ENCODE measurements at regions of chr1 and their contacts with region 1.

Region 1: DNA sequence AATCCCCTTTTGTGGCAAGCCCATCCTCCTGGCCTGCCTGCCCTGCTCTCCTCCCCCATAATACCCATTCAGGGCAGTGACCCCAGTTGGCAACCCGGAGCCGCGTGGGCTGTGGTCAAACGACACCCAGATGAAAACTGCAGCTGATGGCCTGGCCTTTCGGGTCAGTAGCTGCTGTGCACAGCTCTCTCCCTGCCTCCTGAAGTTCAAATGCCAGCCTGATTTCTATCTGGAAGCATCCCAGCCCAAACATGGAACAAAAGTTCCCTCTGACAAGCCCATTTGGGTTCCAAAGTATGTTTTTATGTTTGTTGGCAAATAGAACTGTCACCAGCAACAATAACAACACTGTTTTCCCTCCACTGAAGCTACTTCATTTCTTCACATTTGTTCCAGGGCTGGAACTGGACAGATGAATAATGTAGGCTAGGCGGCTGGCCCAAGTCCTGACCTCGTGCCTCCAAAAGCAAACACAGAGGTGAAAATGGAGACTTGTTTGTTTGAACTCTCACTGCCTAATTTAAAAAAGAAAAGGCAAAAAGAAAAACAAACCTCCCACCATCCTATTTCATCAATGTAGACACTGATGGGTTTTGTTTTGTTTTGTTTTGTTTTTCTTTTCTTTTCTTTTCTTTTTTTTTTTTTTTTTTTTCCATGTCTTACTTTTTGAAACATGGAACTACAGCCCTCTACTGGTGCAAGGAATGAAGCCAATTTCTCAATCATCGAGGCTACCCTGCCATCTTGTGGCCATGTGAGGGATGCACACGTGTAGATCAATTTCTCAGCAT is 179.0 kb downstream of the ADSS2 start:
- DNase-seq: peak; percentile 71
- H3K4me3 ChIP-seq: no peak overlapping the region
- H3K27ac ChIP-seq: peak overlapping the region; percentile 85
- H3K4me1 ChIP-seq: peaks cover 23% of the 10 kb centered on the region
- H3K27me3 ChIP-seq: no peaks in the 10 kb centered on the region
- CTCF ChIP-seq: peak; percentile 99 to 100

Region 2: DNA sequence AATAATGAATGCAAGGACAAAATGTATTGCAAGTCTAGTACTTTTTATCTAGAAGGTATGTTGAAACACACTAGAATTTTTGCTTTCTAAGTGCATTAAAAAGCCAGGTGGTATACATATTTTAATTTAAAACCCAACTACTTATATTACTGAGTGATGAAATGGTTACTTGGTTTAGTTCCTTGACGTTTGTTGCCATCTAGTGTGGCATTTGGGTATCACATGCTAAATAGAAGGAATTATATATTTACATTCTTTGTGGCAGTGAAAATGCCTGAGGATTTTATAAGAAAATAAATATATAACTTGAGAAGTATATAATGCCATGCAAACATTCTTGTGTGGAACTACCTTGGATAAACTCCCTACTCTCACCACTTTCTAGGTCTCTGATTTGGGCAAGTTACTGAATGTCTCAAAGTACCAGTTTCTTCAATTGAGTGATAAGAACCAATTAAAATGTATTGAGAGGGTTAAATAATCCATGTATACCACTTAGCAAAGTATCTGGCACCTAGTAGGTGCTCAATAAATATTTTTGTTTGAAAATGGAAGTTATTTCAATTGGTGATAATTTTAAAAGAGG is 947.3 kb before region 1 on chr1:
- CTCF ChIA-PET with region 1: no interaction called
- dilution Hi-C with region 1: loop called (anchors 25 kb)
- in situ Hi-C with region 1: no loop called
- intact Hi-C with region 1: no loop called
- DNase-seq: peak; percentile 25
- H3K4me3 ChIP-seq: no peak overlapping the region
- H3K27ac ChIP-seq: no peak overlapping the region
- H3K4me1 ChIP-seq: no peaks in the 10 kb centered on the region
- H3K27me3 ChIP-seq: no peaks in the 10 kb centered on the region
- CTCF ChIP-seq: peak; percentile 67 to 74

Region 3: DNA sequence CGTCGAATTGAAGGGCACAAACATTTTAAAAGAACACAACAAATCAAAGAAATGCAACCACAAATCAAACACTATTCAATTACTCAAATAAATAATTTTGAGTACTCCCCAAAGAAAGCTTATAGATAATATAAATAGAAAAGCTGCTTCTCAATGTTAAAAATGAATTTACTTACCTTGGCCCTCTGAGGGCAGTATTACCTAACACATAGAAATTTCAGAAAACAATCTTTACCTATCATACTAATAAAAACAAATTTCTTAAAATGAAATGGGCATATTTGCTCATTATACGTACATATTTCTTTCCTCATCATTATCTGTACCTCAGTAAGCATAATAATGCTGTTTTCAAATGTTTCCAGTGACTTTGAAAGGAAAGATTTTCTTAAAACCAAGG is 564.5 kb before region 1 on chr1:
- CTCF ChIA-PET with region 1: no interaction called
- dilution Hi-C with region 1: no loop called
- in situ Hi-C with region 1: loop called in 1 of 2 experiments (anchors 25 kb)
- intact Hi-C with region 1: loop called (anchors 1 kb)
- DNase-seq: no peak
- H3K4me3 ChIP-seq: no peak overlapping the region
- H3K27ac ChIP-seq: no peak overlapping the region
- H3K4me1 ChIP-seq: no peaks in the 10 kb centered on the region
- H3K27me3 ChIP-seq: no peaks in the 10 kb centered on the region
- CTCF ChIP-seq: peak; percentile 17 to 39

Region 4: GRCh38 chr1:243748706-243749283 is 523.9 kb before region 1 on chr1:
- CTCF ChIA-PET with region 1: no interaction called
- dilution Hi-C with region 1: no loop called
- in situ Hi-C with region 1: no loop called
- intact Hi-C with region 1: loop called (anchors 1 kb)
- DNase-seq: peak; percentile 56
- H3K4me3 ChIP-seq: no peak overlapping the region
- H3K27ac ChIP-seq: no peak overlapping the region
- H3K4me1 ChIP-seq: peaks cover 9% of the 10 kb centered on the region
- H3K27me3 ChIP-seq: no peaks in the 10 kb centered on the region
- CTCF ChIP-seq: peak; percentile 72 to 85

Region 5: DNA sequence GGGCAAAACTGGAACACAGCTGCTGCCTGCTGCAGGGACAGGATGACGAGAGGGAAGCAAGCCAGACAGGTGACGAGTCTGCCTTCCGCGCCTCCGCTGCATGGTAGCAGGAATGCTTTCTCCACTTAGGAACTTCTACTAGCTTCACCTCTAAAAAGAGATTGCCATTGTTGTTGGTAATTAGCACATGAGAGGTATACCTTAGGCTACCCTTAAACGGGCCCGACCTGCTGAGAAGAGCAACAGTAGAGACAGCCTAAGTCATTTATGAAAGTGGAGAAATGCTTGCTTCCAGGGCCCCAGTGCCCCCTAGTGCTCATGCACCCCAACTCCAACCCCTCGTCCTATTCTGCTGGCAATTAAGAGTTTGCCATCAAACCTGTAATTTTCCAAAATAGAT is 325.7 kb before region 1 on chr1:
- CTCF ChIA-PET with region 1: no interaction called
- dilution Hi-C with region 1: no loop called
- in situ Hi-C with region 1: no loop called
- intact Hi-C with region 1: loop called (anchors 1 kb)
- DNase-seq: peak; percentile 8
- H3K4me3 ChIP-seq: no peak overlapping the region
- H3K27ac ChIP-seq: no peak overlapping the region
- H3K4me1 ChIP-seq: peaks cover 20% of the 10 kb centered on the region
- H3K27me3 ChIP-seq: no peaks in the 10 kb centered on the region
- CTCF ChIP-seq: peak; percentile 42 to 45

Region 6: DNA sequence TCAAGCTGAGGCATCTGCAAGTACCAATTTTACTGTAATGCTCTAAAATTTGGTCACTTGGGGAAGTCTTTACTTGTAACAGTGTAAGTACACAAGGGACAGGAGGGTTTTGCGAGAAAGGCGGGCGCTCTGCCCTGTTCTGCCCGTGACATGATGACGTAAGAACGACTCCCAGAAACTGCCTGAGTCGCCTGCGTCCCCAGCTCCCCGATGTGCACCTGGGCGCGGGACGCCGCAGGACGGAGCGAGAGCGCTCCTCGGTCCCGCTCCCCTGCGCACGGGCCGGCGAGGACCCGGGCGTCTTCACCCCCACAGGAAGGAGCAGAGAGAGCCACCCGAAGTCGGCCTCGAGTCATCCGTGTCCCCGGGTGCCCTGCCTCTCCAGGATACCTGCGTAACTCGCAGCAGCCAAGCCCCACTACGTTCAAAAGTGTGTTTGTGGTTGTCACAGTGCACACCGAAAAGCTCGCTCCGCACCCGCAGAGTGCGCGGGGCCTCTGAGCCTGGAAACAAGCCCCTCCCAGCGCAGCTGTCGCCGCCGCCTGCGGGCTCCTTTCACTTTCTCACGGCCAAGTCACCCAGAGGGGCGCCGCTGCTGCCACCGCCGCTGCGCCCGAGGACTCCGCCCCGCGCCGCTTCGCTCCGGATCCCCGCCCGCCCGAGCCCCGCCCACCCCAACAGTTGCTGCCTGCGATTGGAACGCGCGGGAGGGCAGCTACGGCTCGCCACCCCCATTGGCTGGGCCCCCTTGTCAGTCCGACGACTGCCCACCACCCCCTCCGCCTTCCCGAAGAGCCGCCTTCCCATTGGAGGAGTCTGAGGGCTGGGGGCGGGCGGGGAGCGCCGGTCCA is 224.8 kb before region 1 on chr1:
- CTCF ChIA-PET with region 1: interaction called, 3 read pairs
- dilution Hi-C with region 1: no loop called
- in situ Hi-C with region 1: loop called in 1 of 2 experiments (anchors 25 kb)
- intact Hi-C with region 1: loop called (anchors 1 kb)
- DNase-seq: peak; percentile 99
- H3K4me3 ChIP-seq: peak overlapping the region; percentile 61 to 86 (median 82)
- H3K27ac ChIP-seq: peak overlapping the region; percentile 67
- H3K4me1 ChIP-seq: peaks cover 9% of the 10 kb centered on the region
- H3K27me3 ChIP-seq: peaks cover 8% of the 10 kb centered on the region
- CTCF ChIP-seq: no peak

Region 7: DNA sequence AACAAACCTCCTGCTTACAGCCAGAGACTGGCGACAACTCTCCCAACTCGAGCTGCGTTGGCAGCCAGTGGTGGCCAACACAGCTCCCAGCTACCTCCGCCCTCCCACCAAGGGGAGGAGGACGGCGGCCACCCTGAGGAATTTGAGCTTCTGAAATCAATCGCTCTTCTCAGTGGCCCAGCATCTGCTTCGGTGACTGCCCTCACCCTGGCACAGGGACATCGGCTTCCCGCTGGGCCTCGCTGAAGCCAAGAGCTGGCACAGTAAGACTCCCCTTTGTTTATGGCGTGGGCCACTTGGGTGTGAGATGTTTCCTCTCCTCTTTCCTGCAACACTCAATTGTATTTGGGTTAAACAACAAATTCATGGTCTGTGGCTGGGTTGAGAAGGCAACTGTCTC is 85.4 kb before region 1 on chr1:
- CTCF ChIA-PET with region 1: no interaction called
- dilution Hi-C with region 1: no loop called
- in situ Hi-C with region 1: no loop called
- intact Hi-C with region 1: no loop called
- DNase-seq: no peak
- H3K4me3 ChIP-seq: no peak overlapping the region
- H3K27ac ChIP-seq: no peak overlapping the region
- H3K4me1 ChIP-seq: no peaks in the 10 kb centered on the region
- H3K27me3 ChIP-seq: peaks cover 3% of the 10 kb centered on the region
- CTCF ChIP-seq: no peak

Region 8: GRCh38 chr1:244291236-244292201 is 18.9 kb after region 1 on chr1:
- CTCF ChIA-PET with region 1: no interaction called
- dilution Hi-C with region 1: no loop called
- in situ Hi-C with region 1: no loop called
- intact Hi-C with region 1: no loop called
- DNase-seq: no peak
- H3K4me3 ChIP-seq: no peak overlapping the region
- H3K27ac ChIP-seq: no peak overlapping the region
- H3K4me1 ChIP-seq: no peaks in the 10 kb centered on the region
- H3K27me3 ChIP-seq: no peaks in the 10 kb centered on the region
- CTCF ChIP-seq: no peak

Region 9: DNA sequence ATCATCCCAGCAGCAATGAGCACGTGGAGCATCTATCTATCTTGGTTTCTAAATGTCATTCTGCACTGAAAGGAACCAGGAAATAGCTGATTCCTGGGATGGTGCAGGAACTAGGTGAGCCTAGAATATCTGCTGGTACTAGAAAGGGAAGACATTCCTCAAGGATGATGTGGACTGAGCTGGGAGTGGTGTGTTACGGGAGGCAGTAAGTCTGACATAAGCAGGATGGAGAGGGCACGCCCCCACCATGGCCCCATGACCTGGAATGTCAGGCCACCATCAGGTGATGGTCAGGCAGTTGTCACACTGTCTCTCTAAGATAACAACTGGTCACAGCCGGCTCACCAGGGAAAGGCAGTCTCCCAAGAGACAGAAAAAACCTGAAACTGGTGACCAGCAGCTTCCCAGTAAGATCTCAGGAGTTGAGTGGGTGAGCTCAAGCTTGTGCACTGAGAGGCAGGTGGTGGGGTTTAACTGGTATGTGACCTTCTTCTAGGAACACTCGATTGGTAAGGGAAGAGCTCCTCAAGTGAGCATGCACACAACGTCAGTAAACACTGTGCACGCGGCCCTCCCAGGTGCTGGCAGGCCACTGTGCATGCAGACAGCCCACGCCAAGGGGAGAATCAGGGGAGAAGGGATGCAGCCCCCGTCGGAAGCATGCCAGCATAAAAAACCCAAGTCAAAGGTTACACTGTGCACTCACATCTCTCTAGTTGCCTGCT is 30.4 kb after region 1 on chr1:
- CTCF ChIA-PET with region 1: no interaction called
- dilution Hi-C with region 1: no loop called
- in situ Hi-C with region 1: no loop called
- intact Hi-C with region 1: loop called (anchors 1 kb)
- DNase-seq: peak; percentile 72
- H3K4me3 ChIP-seq: no peak overlapping the region
- H3K27ac ChIP-seq: no peak overlapping the region
- H3K4me1 ChIP-seq: peaks cover 15% of the 10 kb centered on the region
- H3K27me3 ChIP-seq: no peaks in the 10 kb centered on the region
- CTCF ChIP-seq: no peak

Measured in mammary epithelial cell (primary cell).